ENCODE measurements at regions of chr15 and their contacts with region 1.

Region 1: DNA sequence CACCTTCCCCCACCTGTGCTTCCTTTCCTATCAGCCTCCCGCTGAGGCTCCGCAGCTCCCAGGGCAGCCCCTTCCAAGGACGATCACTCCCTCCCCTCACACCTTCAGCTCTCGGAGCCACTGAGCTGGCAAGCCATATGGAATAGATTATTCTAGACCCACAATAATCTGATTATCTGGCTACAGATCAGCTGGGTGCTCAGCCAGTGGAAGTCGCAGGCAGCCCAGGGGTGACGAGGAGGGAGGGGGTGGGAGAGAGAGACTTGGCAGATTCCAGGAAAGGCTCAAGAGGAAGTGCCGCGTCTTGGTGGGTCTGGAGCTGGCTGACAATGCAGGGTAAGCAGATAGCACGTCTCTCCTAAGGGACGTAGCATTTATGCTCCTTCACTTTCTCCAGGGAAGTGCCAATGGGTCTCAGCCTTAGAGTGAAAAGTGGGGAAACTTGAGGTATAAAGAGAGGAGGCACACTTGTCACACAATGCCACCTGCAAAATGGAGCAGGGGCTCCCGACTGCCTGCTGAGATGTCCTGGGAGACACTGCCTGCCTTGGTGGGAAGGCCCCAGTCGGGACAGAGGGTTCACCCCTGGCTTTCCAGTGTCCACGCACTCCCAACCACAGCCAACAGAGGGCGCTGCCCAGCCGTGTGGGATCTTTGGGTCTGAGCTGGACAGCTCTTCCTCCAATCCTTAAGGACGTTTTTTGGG is 9.4 kb upstream of the MESP1 start:
- DNase-seq: peak; percentile 94
- H3K4me3 Mint-ChIP-seq: no peak overlapping the region
- H3K27ac Mint-ChIP-seq: no peak overlapping the region
- H3K4me1 Mint-ChIP-seq: peaks cover 5% of the 10 kb centered on the region
- H3K27me3 Mint-ChIP-seq: peaks cover 3% of the 10 kb centered on the region

Region 2: GRCh38 chr15:89828241-89829082 is 68.0 kb after region 1 on chr15:
- intact Hi-C with region 1: no loop called
- DNase-seq: no peak
- H3K4me3 Mint-ChIP-seq: no peak overlapping the region
- H3K27ac Mint-ChIP-seq: no peak overlapping the region
- H3K4me1 Mint-ChIP-seq: peaks cover 2% of the 10 kb centered on the region
- H3K27me3 Mint-ChIP-seq: no peaks in the 10 kb centered on the region

Region 3: GRCh38 chr15:89874926-89875564 is 114.6 kb after region 1 on chr15:
- intact Hi-C with region 1: loop called (anchors 5 kb)
- DNase-seq: peak; percentile 93
- H3K4me3 Mint-ChIP-seq: no peak overlapping the region
- H3K27ac Mint-ChIP-seq: peak overlapping the region; percentile 5
- H3K4me1 Mint-ChIP-seq: peaks cover 2% of the 10 kb centered on the region
- H3K27me3 Mint-ChIP-seq: no peaks in the 10 kb centered on the region

Region 4: GRCh38 chr15:90086868-90087268 is 326.4 kb after region 1 on chr15:
- intact Hi-C with region 1: loop called (anchors 1 kb)
- DNase-seq: peak; percentile 86
- H3K4me3 Mint-ChIP-seq: no peak overlapping the region
- H3K27ac Mint-ChIP-seq: peak overlapping the region; percentile 51
- H3K4me1 Mint-ChIP-seq: peaks cover 8% of the 10 kb centered on the region
- H3K27me3 Mint-ChIP-seq: no peaks in the 10 kb centered on the region